B cell (primary cell): ENCODE measurements at regions of chr18 and their contacts with region 1.

Region 1: GRCh38 chr18:9226463-9226862 is 89.9 kb downstream of the ANKRD12 start:
- DNase-seq: no peak
- ATAC-seq: no peak
- H3K4me3 ChIP-seq: no peak overlapping the region
- H3K4me3 Mint-ChIP-seq: no peak overlapping the region
- H3K27ac ChIP-seq: peak overlapping the region in 1 of 2 donors; percentile 31
- H3K27ac Mint-ChIP-seq: no peak overlapping the region
- H3K4me1 ChIP-seq: no peaks in the 10 kb centered on the region
- H3K4me1 Mint-ChIP-seq: peaks cover 11% of the 10 kb centered on the region
- H3K27me3 ChIP-seq: no peaks in the 10 kb centered on the region
- H3K27me3 Mint-ChIP-seq: no peaks in the 10 kb centered on the region
- CTCF ChIP-seq: no peak

Region 2: GRCh38 chr18:8750954-8751415 is 475.5 kb before region 1 on chr18:
- CTCF ChIA-PET with region 1: no interaction called
- POLR2A ChIA-PET with region 1: no interaction called
- intact Hi-C with region 1: no loop called
- DNase-seq: no peak
- ATAC-seq: no peak
- H3K4me3 ChIP-seq: no peak overlapping the region
- H3K4me3 Mint-ChIP-seq: no peak overlapping the region
- H3K27ac ChIP-seq: no peak overlapping the region
- H3K27ac Mint-ChIP-seq: no peak overlapping the region
- H3K4me1 ChIP-seq: peaks cover 21 to 22% of the 10 kb centered on the region in 2 donors
- H3K4me1 Mint-ChIP-seq: peaks cover 27% of the 10 kb centered on the region
- H3K27me3 ChIP-seq: no peaks in the 10 kb centered on the region
- H3K27me3 Mint-ChIP-seq: no peaks in the 10 kb centered on the region
- CTCF ChIP-seq: no peak

Region 3: DNA sequence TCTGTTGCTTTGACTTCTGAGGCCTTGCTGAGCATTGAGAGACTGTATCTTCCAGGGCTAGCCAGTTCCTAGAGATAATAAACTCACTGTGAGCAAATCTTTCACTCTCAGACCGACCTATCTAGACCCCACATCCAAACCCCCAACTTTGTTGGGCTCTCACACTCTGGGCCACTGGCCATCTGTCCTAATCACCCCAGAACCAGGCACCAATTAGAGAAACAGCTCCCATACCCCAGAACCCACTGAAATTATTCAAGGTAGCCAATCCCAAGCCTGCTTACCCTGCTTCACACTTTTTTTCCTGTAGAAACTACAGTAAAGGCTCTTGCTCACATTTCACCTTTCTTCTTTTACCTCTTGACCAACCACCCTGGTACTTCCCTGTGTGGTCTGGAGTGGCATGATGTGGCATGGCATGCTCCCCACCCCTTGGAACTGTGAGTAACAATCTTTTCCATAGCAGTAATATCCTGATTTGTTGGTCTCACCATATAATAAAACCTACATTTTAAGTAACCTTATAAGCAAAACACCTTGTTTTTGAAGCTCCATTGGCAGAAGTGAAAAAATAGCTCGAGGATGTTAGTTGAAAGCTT is 34.7 kb before region 1 on chr18:
- CTCF ChIA-PET with region 1: no interaction called
- POLR2A ChIA-PET with region 1: interaction called, 8 read pairs
- intact Hi-C with region 1: loop called (anchors 5 kb)
- DNase-seq: no peak
- ATAC-seq: no peak
- H3K4me3 ChIP-seq: no peak overlapping the region
- H3K4me3 Mint-ChIP-seq: no peak overlapping the region
- H3K27ac ChIP-seq: no peak overlapping the region
- H3K27ac Mint-ChIP-seq: peak overlapping the region; percentile 17
- H3K4me1 ChIP-seq: no peaks in the 10 kb centered on the region
- H3K4me1 Mint-ChIP-seq: no peaks in the 10 kb centered on the region
- H3K27me3 ChIP-seq: no peaks in the 10 kb centered on the region
- H3K27me3 Mint-ChIP-seq: no peaks in the 10 kb centered on the region
- CTCF ChIP-seq: no peak

Region 4: GRCh38 chr18:9240270-9240669 is 13.8 kb after region 1 on chr18:
- CTCF ChIA-PET with region 1: no interaction called
- POLR2A ChIA-PET with region 1: no interaction called
- intact Hi-C with region 1: no loop called
- DNase-seq: no peak
- ATAC-seq: no peak
- H3K4me3 ChIP-seq: no peak overlapping the region
- H3K4me3 Mint-ChIP-seq: no peak overlapping the region
- H3K27ac ChIP-seq: no peak overlapping the region
- H3K27ac Mint-ChIP-seq: no peak overlapping the region
- H3K4me1 ChIP-seq: no peaks in the 10 kb centered on the region
- H3K4me1 Mint-ChIP-seq: peaks cover 5% of the 10 kb centered on the region
- H3K27me3 ChIP-seq: no peaks in the 10 kb centered on the region
- H3K27me3 Mint-ChIP-seq: no peaks in the 10 kb centered on the region
- CTCF ChIP-seq: no peak